ENCODE measurements at regions of chr16 and their contacts with region 1.

Region 1: GRCh38 chr16:85382717-85383118 is 230.4 kb upstream of the GSE1 start:
- DNase-seq: no peak
- H3K4me3 ChIP-seq: no peak overlapping the region
- H3K27ac ChIP-seq: no peak overlapping the region
- H3K4me1 ChIP-seq: 0 out of 2 replicates have a peak, but pooled peaks cover 8% of the 10 kb centered on the region
- H3K27me3 ChIP-seq: no peaks in the 10 kb centered on the region
- CTCF ChIP-seq: no peak

Region 2: GRCh38 chr16:85347213-85347591 is 35.5 kb before region 1 on chr16:
- CTCF ChIA-PET with region 1: no interaction called
- POLR2A ChIA-PET with region 1: no interaction called
- intact Hi-C with region 1: no loop called
- DNase-seq: peak in 1 of 2 experiments; percentile 44
- H3K4me3 ChIP-seq: no peak overlapping the region
- H3K27ac ChIP-seq: no peak overlapping the region
- H3K4me1 ChIP-seq: peaks cover 17% of the 10 kb centered on the region
- H3K27me3 ChIP-seq: no peaks in the 10 kb centered on the region
- CTCF ChIP-seq: peak; percentile 60

Region 3: DNA sequence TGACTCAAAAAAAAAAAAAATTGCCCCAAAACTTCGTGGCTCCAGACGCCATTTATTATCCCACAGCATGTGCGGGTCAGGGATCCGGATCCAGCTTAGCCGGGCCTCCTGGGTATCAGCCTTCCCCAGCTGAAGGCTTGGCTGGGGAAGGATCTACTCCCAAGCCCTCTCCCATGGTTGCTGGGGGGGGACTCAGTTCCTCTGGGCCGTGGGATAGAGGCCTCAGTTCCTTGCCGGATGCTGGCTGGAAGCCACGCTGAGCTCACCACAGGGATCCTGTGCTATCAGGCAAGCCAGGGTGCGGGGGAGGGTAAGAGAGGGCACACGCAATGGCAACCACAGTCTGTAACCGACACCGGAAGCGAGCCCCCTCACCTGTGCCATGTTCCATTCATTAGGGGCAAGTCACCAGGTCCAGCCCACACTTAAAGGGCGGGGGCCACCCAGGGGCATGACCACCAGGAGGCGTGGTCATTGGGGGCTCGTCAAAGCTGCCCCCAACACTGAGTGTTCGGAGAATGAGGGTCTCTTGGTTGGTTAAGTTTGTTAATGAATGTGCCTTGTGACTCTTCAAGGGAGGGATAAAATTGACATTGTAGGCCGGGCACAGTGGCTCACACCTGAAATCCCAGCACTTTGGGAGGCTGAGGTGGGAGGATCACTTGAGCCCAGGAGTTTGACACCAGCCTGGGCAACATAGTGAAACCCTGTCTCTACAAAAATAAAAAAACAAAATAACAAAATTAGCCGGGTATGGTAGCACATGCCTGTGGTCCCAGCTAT is 20.4 kb after region 1 on chr16:
- CTCF ChIA-PET with region 1: no interaction called
- POLR2A ChIA-PET with region 1: interaction called, 10 read pairs
- intact Hi-C with region 1: no loop called
- DNase-seq: no peak
- H3K4me3 ChIP-seq: no peak overlapping the region
- H3K27ac ChIP-seq: no peak overlapping the region
- H3K4me1 ChIP-seq: no peaks in the 10 kb centered on the region
- H3K27me3 ChIP-seq: no peaks in the 10 kb centered on the region
- CTCF ChIP-seq: no peak